Aorta (tissue), 5 donors: ENCODE measurements at regions of chr1 and their contacts with region 1.

Region 1: GRCh38 chr1:89407360-89407759 is 43.5 kb downstream of the GBP6 start:
- DNase-seq: no peak
- ATAC-seq: peak; percentile 75
- H3K4me3 ChIP-seq: peak overlapping the region; percentile 48 to 51
- H3K27ac ChIP-seq: no peak overlapping the region
- H3K4me1 ChIP-seq: no peaks in the 10 kb centered on the region
- H3K27me3 ChIP-seq: no peaks in the 10 kb centered on the region

Region 2: GRCh38 chr1:89171067-89171438 is 236.3 kb before region 1 on chr1:
- intact Hi-C with region 1: loop called in 1 of 2 experiments (anchors 10 kb)
- DNase-seq: no peak
- ATAC-seq: no peak
- H3K4me3 ChIP-seq: no peak overlapping the region
- H3K27ac ChIP-seq: no peak overlapping the region
- H3K4me1 ChIP-seq: no peaks in the 10 kb centered on the region
- H3K27me3 ChIP-seq: no peaks in the 10 kb centered on the region

Region 3: GRCh38 chr1:89516055-89516454 is 108.7 kb after region 1 on chr1:
- intact Hi-C with region 1: no loop called
- DNase-seq: no peak
- ATAC-seq: no peak
- H3K4me3 ChIP-seq: no peak overlapping the region
- H3K27ac ChIP-seq: no peak overlapping the region
- H3K4me1 ChIP-seq: no peaks in the 10 kb centered on the region
- H3K27me3 ChIP-seq: no peaks in the 10 kb centered on the region